Adrenal gland (tissue), 19 donors: ENCODE measurements at regions of chr15 and their contacts with region 1.

Region 1: GRCh38 chr15:71448688-71449114 is 333.4 kb downstream of the THSD4 start:
- DNase-seq: peak; percentile 46 to 81 (median 66)
- H3K4me3 ChIP-seq: no peak overlapping the region
- H3K27ac ChIP-seq: peak overlapping the region in 1 of 5 donors; percentile 63
- H3K4me1 ChIP-seq: peaks cover 3 to 12% of the 10 kb centered on the region in 2 donors
- H3K27me3 ChIP-seq: no peaks in the 10 kb centered on the region
- CTCF ChIP-seq: peak; percentile 77 to 97 (median 93)
- POLR2A ChIP-seq: no peak

Region 2: GRCh38 chr15:71003319-71003718 is 445.4 kb before region 1 on chr15:
- intact Hi-C with region 1: loop called in 1 of 2 experiments (anchors 10 kb)
- DNase-seq: no peak
- H3K4me3 ChIP-seq: no peak overlapping the region
- H3K27ac ChIP-seq: no peak overlapping the region
- H3K4me1 ChIP-seq: no peaks in the 10 kb centered on the region
- H3K27me3 ChIP-seq: no peaks in the 10 kb centered on the region
- CTCF ChIP-seq: no peak
- POLR2A ChIP-seq: no peak

Region 3: GRCh38 chr15:71386448-71387236 is 62.1 kb before region 1 on chr15:
- intact Hi-C with region 1: no loop called
- DNase-seq: peak in 1 of 7 donors; percentile 21
- H3K4me3 ChIP-seq: no peak overlapping the region
- H3K27ac ChIP-seq: no peak overlapping the region
- H3K4me1 ChIP-seq: peaks cover 0 to 25% of the 10 kb centered on the region in 2 donors
- H3K27me3 ChIP-seq: no peaks in the 10 kb centered on the region
- CTCF ChIP-seq: peak; percentile 10 to 71 (median 54)
- POLR2A ChIP-seq: no peak

Region 4: DNA sequence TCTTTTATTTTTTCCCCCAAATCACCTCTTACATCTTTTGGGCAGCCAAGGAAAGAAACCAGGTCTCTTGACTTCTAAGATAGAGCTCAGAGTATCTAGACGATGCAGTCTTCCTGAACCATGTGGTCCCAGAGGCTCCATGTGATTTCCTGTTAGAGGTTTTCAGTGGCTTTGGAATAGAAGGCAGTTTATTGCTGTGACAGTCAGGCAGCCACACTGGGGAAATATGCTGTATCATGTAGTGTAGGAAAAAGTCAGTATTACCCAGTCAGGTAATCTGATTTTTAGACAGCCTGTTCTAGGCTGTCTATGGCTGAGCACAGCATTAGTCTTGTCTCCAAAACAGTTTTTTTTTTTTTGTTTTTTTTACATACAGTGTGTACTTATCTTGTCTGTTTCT is 39.2 kb before region 1 on chr15:
- intact Hi-C with region 1: no loop called
- DNase-seq: no peak
- H3K4me3 ChIP-seq: no peak overlapping the region
- H3K27ac ChIP-seq: no peak overlapping the region
- H3K4me1 ChIP-seq: no peaks in the 10 kb centered on the region
- H3K27me3 ChIP-seq: no peaks in the 10 kb centered on the region
- CTCF ChIP-seq: no peak
- POLR2A ChIP-seq: no peak

Region 5: GRCh38 chr15:71651750-71652186 is 203.1 kb after region 1 on chr15:
- intact Hi-C with region 1: loop called in 1 of 2 experiments (anchors 5 kb)
- DNase-seq: peak in 6 of 7 donors; percentile 24 to 57 (median 27)
- H3K4me3 ChIP-seq: no peak overlapping the region
- H3K27ac ChIP-seq: no peak overlapping the region
- H3K4me1 ChIP-seq: no peaks in the 10 kb centered on the region
- H3K27me3 ChIP-seq: no peaks in the 10 kb centered on the region
- CTCF ChIP-seq: peak in 5 of 6 experiments; percentile 9 to 60 (median 53)
- POLR2A ChIP-seq: no peak

Region 6: GRCh38 chr15:71730277-71731144 is 281.8 kb after region 1 on chr15:
- intact Hi-C with region 1: loop called in 1 of 2 experiments (anchors 5 kb)
- DNase-seq: peak; percentile 45 to 76 (median 54)
- H3K4me3 ChIP-seq: no peak overlapping the region
- H3K27ac ChIP-seq: no peak overlapping the region
- H3K4me1 ChIP-seq: no peaks in the 10 kb centered on the region
- H3K27me3 ChIP-seq: no peaks in the 10 kb centered on the region
- CTCF ChIP-seq: peak; percentile 58 to 81 (median 78)
- POLR2A ChIP-seq: no peak